A549 (cell line): ENCODE measurements at regions of chr2 and their contacts with region 1.

Region 1: GRCh38 chr2:205947621-205948495 is 138.1 kb downstream of the INO80D start:
- DNase-seq: peak; percentile 54 to 60
- ATAC-seq: peak; percentile 73 to 89
- H3K4me3 ChIP-seq: no peak overlapping the region
- H3K27ac ChIP-seq: no peak overlapping the region
- H3K4me1 ChIP-seq: peaks cover 17% of the 10 kb centered on the region
- CTCF ChIP-seq: peak; percentile 90
- EP300 ChIP-seq: no peak
- POLR2A ChIP-seq: no peak
- RAD21 ChIP-seq: peak; percentile 84 to 85

Region 2: GRCh38 chr2:205934443-205934842 is 13.4 kb before region 1 on chr2:
- CTCF ChIA-PET with region 1: interaction called, 24 read pairs
- POLR2A ChIA-PET with region 1: no interaction called
- DNase-seq: peak; percentile 31 to 54
- ATAC-seq: peak; percentile 54 to 81; a peak in 4 of 6 replicates
- H3K4me3 ChIP-seq: no peak overlapping the region
- H3K27ac ChIP-seq: no peak overlapping the region
- H3K4me1 ChIP-seq: 0 out of 3 replicates have a peak, but pooled peaks cover 2% of the 10 kb centered on the region
- CTCF ChIP-seq: no peak; the same call in 1 of the 3 replicates
- EP300 ChIP-seq: no peak
- POLR2A ChIP-seq: no peak
- RAD21 ChIP-seq: peak in 1 of 2 experiments; percentile 37; a peak in 2 of 5 replicates

Region 3: GRCh38 chr2:205967391-205968075 is 19.7 kb after region 1 on chr2:
- CTCF ChIA-PET with region 1: interaction called, 11 read pairs
- POLR2A ChIA-PET with region 1: no interaction called
- DNase-seq: no peak
- ATAC-seq: no peak; a peak in 1 of 6 replicates
- H3K4me3 ChIP-seq: no peak overlapping the region
- H3K27ac ChIP-seq: no peak overlapping the region
- H3K4me1 ChIP-seq: no peaks in the 10 kb centered on the region
- CTCF ChIP-seq: no peak
- EP300 ChIP-seq: no peak
- POLR2A ChIP-seq: no peak
- RAD21 ChIP-seq: no peak

Region 4: DNA sequence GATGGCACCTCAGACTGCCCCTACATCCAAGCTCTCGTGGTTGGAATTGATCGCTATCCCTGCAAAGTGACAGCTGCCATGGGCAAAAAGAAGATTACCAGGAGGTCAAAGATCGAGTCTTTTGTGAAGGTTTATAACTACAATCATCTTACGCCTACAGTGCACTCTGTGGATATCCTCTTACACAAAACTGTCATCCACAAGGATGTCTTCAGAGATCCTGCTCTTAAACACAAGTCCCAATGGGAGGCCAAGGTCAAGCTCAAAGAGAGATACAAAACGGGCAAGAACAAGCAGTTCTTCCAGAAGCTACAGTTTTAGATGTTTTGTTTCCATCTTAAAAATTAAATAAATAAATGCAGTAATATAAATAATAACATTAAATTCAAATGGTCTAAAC is 92.7 kb after region 1 on chr2:
- CTCF ChIA-PET with region 1: no interaction called
- POLR2A ChIA-PET with region 1: no interaction called
- DNase-seq: no peak
- ATAC-seq: no peak
- H3K4me3 ChIP-seq: no peak overlapping the region
- H3K27ac ChIP-seq: no peak overlapping the region
- H3K4me1 ChIP-seq: no peaks in the 10 kb centered on the region
- CTCF ChIP-seq: no peak
- EP300 ChIP-seq: no peak
- POLR2A ChIP-seq: no peak
- RAD21 ChIP-seq: no peak